Activated CD4-positive, alpha-beta T cell treated with anti-CD3 and anti-CD28 coated beads for 36 hours (primary cell): ENCODE measurements at regions of chr9 and their contacts with region 1.

Region 1: GRCh38 chr9:127423934-127424675 is at the start of gene ZNF79:
- DNase-seq: peak; percentile 96
- ATAC-seq: peak; percentile 81
- H3K4me3 Mint-ChIP-seq: peak within 1 kb of the TSS; percentile 99
- H3K27ac Mint-ChIP-seq: peak within 1 kb of the TSS; percentile 89
- H3K4me1 Mint-ChIP-seq: peaks cover 49% of the 10 kb centered on the region
- H3K27me3 Mint-ChIP-seq: no peaks in the 10 kb centered on the region
- total RNA-seq, gene ZNF79: 6.9 to 7.6 TPM

Region 2: GRCh38 chr9:126804696-126805545 is 619.2 kb before region 1 on chr9 and contains the start of gene ZBTB43:
- CTCF ChIA-PET with region 1: no interaction called
- POLR2A ChIA-PET with region 1: no interaction called
- intact Hi-C with region 1: loop called in 1 of 2 experiments (anchors 2 kb)
- DNase-seq: peak; percentile 99
- ATAC-seq: peak; percentile 85
- H3K4me3 Mint-ChIP-seq: peak within 1 kb of the TSS; percentile 96
- H3K27ac Mint-ChIP-seq: peak within 1 kb of the TSS; percentile 100
- H3K4me1 Mint-ChIP-seq: peaks cover 36% of the 10 kb centered on the region
- H3K27me3 Mint-ChIP-seq: no peaks in the 10 kb centered on the region
- total RNA-seq, gene ZBTB43: 19.3 to 23.0 TPM

Region 3: GRCh38 chr9:127004946-127005769 is 418.9 kb before region 1 on chr9:
- CTCF ChIA-PET with region 1: no interaction called
- POLR2A ChIA-PET with region 1: no interaction called
- intact Hi-C with region 1: loop called in 1 of 2 experiments (anchors 1 kb)
- DNase-seq: peak; percentile 87
- ATAC-seq: peak; percentile 98
- H3K4me3 Mint-ChIP-seq: no peak overlapping the region
- H3K27ac Mint-ChIP-seq: no peak overlapping the region
- H3K4me1 Mint-ChIP-seq: peaks cover 24% of the 10 kb centered on the region
- H3K27me3 Mint-ChIP-seq: peaks cover 45% of the 10 kb centered on the region

Region 4: GRCh38 chr9:127244609-127245601 is 179.2 kb before region 1 on chr9:
- CTCF ChIA-PET with region 1: no interaction called
- POLR2A ChIA-PET with region 1: no interaction called
- intact Hi-C with region 1: loop called in 1 of 2 experiments (anchors 1 kb)
- DNase-seq: peak; percentile 98
- ATAC-seq: peak; percentile 100
- H3K4me3 Mint-ChIP-seq: peak overlapping the region; percentile 78
- H3K27ac Mint-ChIP-seq: peak overlapping the region; percentile 59
- H3K4me1 Mint-ChIP-seq: peaks cover 6% of the 10 kb centered on the region
- H3K27me3 Mint-ChIP-seq: peaks cover 5% of the 10 kb centered on the region

Region 5: GRCh38 chr9:127388037-127388855 is 35.9 kb before region 1 on chr9:
- CTCF ChIA-PET with region 1: interaction called, 7 read pairs
- POLR2A ChIA-PET with region 1: interaction called, 3 read pairs
- intact Hi-C with region 1: loop called (anchors 1 kb)
- DNase-seq: peak; percentile 94
- ATAC-seq: peak; percentile 97
- H3K4me3 Mint-ChIP-seq: peak overlapping the region; percentile 3
- H3K27ac Mint-ChIP-seq: peak overlapping the region; percentile 81
- H3K4me1 Mint-ChIP-seq: peaks cover 20% of the 10 kb centered on the region
- H3K27me3 Mint-ChIP-seq: peaks cover 68% of the 10 kb centered on the region

Region 6: GRCh38 chr9:127611899-127612790 is 188.0 kb after region 1 on chr9 and contains the start of gene STXBP1:
- CTCF ChIA-PET with region 1: no interaction called
- POLR2A ChIA-PET with region 1: no interaction called
- intact Hi-C with region 1: loop called in 1 of 2 experiments (anchors 1 kb)
- DNase-seq: peak; percentile 92
- ATAC-seq: peak; percentile 87
- H3K4me3 Mint-ChIP-seq: peak within 1 kb of the TSS; percentile 85
- H3K27ac Mint-ChIP-seq: peak within 1 kb of the TSS; percentile 71
- H3K4me1 Mint-ChIP-seq: peaks cover 26% of the 10 kb centered on the region
- H3K27me3 Mint-ChIP-seq: peaks cover 32% of the 10 kb centered on the region
- total RNA-seq, gene STXBP1: 15.9 to 18.1 TPM

Region 7: DNA sequence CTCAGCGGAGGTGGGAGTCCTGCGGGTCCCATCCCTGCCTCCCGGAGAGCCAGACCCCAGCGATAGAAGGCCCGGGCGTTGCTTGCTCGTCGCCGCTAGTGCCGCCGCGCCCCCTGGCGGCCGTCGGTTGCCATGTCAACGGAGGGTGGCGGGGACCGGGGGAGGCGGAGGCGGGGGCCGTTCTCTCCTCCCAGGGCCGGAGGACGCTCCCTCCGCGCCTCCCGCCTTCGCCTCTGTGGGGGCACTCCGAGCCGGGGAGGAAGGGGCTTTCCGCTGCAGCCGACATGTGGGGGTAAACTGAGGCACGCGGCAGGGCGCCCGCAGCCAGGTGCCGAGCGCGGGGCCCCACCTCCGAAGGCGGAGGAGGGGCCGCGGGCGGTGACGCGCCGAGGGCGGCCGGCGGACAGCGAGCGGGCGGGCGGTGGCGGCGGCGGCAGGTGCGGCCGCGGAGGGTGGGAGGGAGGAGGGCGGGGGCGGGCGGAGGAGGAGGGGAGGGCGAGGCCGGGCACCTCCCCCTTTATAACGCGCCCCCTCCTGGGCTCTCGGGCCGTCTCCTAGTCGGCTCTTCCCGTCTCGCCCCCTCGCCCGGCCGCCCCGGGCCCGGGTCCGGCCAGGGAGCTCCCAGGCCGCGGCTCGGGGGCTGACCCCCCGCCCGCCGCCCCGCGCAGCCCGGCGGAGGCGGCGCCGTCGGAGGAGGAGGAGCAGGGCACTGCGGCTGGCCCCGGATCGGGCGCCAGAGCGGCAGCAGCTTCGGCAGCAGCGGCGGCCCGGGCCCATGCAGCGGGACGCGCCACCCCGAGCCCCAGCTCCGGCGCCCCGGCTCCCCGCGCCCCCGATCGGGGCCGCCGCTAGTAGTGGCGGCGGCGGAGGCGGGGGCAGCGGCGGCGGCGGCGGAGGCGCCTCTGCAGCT is 361.2 kb after region 1 on chr9:
- CTCF ChIA-PET with region 1: interaction called, 4 read pairs
- POLR2A ChIA-PET with region 1: no interaction called
- intact Hi-C with region 1: loop called in 1 of 2 experiments (anchors 5 kb)
- DNase-seq: peak; percentile 93
- ATAC-seq: peak; percentile 34
- H3K4me3 Mint-ChIP-seq: peak overlapping the region; percentile 97
- H3K27ac Mint-ChIP-seq: peak overlapping the region; percentile 97
- H3K4me1 Mint-ChIP-seq: peaks cover 74% of the 10 kb centered on the region
- H3K27me3 Mint-ChIP-seq: no peaks in the 10 kb centered on the region

Region 8: DNA sequence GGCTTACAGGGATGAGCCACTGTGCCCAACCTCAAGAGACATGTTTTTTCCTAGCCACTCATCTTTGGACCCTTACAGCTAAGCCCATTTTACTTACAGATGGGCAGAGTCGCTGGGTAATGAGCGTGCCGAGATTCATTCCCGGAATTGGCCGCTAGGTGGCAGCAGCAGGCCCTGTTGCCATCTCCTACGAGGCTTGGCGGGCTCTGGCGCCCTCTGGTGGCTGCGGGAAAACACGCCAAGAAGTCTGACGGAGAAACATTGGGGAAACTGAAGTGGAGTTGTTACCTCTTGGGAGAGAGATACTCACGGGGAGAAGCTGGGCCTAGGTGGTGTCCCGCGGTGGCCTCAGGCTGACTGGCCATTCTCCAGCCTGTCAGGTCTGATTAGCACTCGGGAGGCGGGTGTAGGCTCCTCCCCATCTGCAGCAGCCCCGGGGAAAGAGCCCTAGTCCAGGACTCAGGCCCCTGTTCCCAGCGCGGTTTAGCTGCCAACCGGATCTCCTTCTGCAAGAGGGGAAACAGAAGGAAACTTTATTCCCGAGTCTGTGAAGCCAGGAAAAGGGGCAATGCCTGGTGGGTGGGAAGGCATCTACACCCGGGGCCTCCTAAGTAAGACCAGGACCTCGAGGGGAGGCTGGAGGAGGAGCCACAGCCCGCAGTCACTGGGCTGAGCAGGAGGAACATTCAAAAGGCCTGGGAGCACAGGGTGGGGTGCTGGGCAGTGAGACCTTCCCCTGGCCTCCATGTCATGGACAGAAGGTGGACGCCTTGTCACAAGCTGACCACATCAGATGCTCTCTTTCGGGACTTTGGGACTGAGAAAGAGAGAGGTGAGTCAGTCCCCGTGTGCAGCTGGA is 693.7 kb after region 1 on chr9:
- CTCF ChIA-PET with region 1: no interaction called
- POLR2A ChIA-PET with region 1: no interaction called
- intact Hi-C with region 1: no loop called
- DNase-seq: peak; percentile 99
- ATAC-seq: peak; percentile 94
- H3K4me3 Mint-ChIP-seq: no peak overlapping the region
- H3K27ac Mint-ChIP-seq: no peak overlapping the region
- H3K4me1 Mint-ChIP-seq: peaks cover 5% of the 10 kb centered on the region
- H3K27me3 Mint-ChIP-seq: no peaks in the 10 kb centered on the region